ENCODE measurements at regions of chr12 and their contacts with region 1.

Region 1: GRCh38 chr12:65881965-65882413 is 57.7 kb downstream of the HMGA2 start:
- DNase-seq: peak; percentile 91
- H3K4me3 ChIP-seq: peak overlapping the region in 2 of 3 experiments; percentile 0 to 16
- H3K27ac ChIP-seq: peak overlapping the region; percentile 70
- H3K4me1 ChIP-seq: peaks cover 93% of the 10 kb centered on the region
- H3K27me3 ChIP-seq: no peaks in the 10 kb centered on the region
- CTCF ChIP-seq: peak; percentile 32 to 53
- POLR2A ChIP-seq: no peak

Region 2: DNA sequence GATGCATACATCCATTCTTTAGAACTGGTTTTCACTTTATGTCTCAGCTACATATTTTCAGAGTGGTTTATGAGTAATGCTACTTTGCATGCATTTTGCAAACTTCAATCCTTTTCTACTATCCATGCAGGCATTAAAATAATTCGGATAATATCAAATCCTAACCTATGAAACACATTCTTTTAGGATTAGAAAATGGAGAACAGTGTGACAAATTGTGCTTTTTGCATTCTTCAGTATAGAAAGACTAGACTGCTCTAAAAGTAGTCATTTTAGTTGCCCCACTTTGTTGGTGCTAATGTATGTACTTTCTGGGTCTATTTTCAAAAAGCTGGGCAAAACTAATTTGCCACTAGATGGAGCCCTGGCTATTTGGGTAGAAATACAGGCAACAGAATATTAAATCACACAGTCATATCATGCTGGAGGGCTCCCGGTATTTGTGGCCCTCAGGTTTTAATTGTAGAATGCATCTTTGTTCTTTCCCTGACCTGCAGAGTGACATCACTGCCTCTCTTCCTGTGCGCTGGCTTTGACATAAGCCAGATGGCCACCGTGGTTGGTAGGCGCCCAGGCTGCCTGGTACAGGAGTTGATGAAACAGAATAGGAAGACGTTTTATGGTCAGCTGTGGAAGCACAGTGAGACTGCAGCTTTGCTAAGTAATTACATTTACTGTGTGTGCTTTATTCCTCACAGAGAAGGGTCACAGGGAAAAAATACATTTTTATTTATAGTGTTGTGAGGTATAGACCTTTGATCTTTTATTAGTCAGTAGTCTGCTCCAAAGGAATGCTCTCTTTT is 575.4 kb before region 1 on chr12:
- CTCF ChIA-PET with region 1: interaction called, 5 read pairs
- POLR2A ChIA-PET with region 1: no interaction called
- dilution Hi-C with region 1: no loop called
- intact Hi-C with region 1: loop called (anchors 5 kb)
- DNase-seq: peak; percentile 83
- H3K4me3 ChIP-seq: peak overlapping the region in 1 of 3 experiments; percentile 44
- H3K27ac ChIP-seq: peak overlapping the region; percentile 96
- H3K4me1 ChIP-seq: peaks cover 46% of the 10 kb centered on the region
- H3K27me3 ChIP-seq: no peaks in the 10 kb centered on the region
- CTCF ChIP-seq: peak; percentile 51 to 53
- POLR2A ChIP-seq: no peak

Region 3: DNA sequence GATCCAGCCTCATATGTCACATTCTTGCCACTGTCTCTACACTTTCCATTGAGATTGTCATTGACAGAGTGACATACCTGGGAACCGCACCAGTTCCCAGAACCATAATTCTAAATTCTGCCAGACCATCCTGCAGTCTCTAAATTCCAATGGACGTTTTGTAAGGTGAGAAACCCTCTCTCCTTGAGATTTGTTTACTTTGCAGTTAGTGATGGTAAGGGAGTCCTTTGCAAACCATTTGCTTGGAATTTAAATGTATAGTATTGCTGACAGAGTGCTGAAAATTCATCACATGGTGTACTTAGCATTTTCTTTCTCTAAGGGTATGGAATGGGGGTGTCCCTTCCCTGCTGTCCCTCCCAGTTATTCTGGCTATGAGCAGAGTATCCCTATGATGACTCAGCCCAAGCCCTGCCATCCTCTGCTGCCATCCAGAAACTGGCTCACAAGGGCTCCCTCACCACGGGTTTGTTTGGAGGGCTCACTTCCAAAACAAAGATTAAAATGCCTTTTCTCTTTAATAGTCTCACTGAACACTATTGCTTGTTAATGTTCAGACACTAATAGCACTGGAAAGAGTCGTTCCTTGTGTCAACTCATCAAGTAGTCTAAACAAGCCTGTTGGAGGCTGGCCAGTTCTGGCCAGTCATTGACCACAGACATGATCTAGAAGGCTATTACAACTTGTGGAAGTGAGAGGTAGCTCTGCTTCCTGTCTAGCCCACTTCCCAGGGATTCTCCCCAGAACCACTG is 186.7 kb before region 1 on chr12:
- CTCF ChIA-PET with region 1: interaction called, 3 read pairs
- POLR2A ChIA-PET with region 1: no interaction called
- dilution Hi-C with region 1: no loop called
- intact Hi-C with region 1: loop called (anchors 5 kb)
- DNase-seq: peak; percentile 94
- H3K4me3 ChIP-seq: no peak overlapping the region
- H3K27ac ChIP-seq: peak overlapping the region; percentile 88
- H3K4me1 ChIP-seq: peaks cover 31% of the 10 kb centered on the region
- H3K27me3 ChIP-seq: no peaks in the 10 kb centered on the region
- CTCF ChIP-seq: no peak
- POLR2A ChIP-seq: peak; percentile 35

Region 4: GRCh38 chr12:65868133-65868705 is 13.8 kb before region 1 on chr12:
- CTCF ChIA-PET with region 1: interaction called, 24 read pairs
- POLR2A ChIA-PET with region 1: no interaction called
- dilution Hi-C with region 1: no loop called
- intact Hi-C with region 1: no loop called
- DNase-seq: peak; percentile 59
- H3K4me3 ChIP-seq: no peak overlapping the region
- H3K27ac ChIP-seq: peak overlapping the region; percentile 16
- H3K4me1 ChIP-seq: peaks cover 32% of the 10 kb centered on the region
- H3K27me3 ChIP-seq: no peaks in the 10 kb centered on the region
- CTCF ChIP-seq: no peak
- POLR2A ChIP-seq: no peak

Region 5: GRCh38 chr12:65930114-65930828 is 48.3 kb after region 1 on chr12:
- CTCF ChIA-PET with region 1: interaction called, 13 read pairs
- POLR2A ChIA-PET with region 1: no interaction called
- dilution Hi-C with region 1: no loop called
- intact Hi-C with region 1: no loop called
- DNase-seq: peak; percentile 48
- H3K4me3 ChIP-seq: peak overlapping the region in 1 of 3 experiments; percentile 30
- H3K27ac ChIP-seq: peak overlapping the region; percentile 79
- H3K4me1 ChIP-seq: peaks cover 79% of the 10 kb centered on the region
- H3K27me3 ChIP-seq: no peaks in the 10 kb centered on the region
- CTCF ChIP-seq: no peak
- POLR2A ChIP-seq: no peak

Region 6: GRCh38 chr12:65986047-65986446 is 104.1 kb after region 1 on chr12:
- CTCF ChIA-PET with region 1: no interaction called
- POLR2A ChIA-PET with region 1: no interaction called
- dilution Hi-C with region 1: no loop called
- intact Hi-C with region 1: loop called (anchors 1 kb)
- DNase-seq: peak; percentile 28
- H3K4me3 ChIP-seq: no peak overlapping the region
- H3K27ac ChIP-seq: no peak overlapping the region
- H3K4me1 ChIP-seq: no peaks in the 10 kb centered on the region
- H3K27me3 ChIP-seq: no peaks in the 10 kb centered on the region
- CTCF ChIP-seq: peak in 1 of 2 donors; percentile 12
- POLR2A ChIP-seq: no peak

Measured in endothelial cell of umbilical vein (primary cell).